Dendritic cell treated with granulocyte-macrophage colony-stimulating factor and Interleukin-4, amounts not matched to agents 40 ng/mL and 50 ng/mL, for 4 days (primary cell): ENCODE measurements at regions of chr21 and their contacts with region 1.

Region 1: DNA sequence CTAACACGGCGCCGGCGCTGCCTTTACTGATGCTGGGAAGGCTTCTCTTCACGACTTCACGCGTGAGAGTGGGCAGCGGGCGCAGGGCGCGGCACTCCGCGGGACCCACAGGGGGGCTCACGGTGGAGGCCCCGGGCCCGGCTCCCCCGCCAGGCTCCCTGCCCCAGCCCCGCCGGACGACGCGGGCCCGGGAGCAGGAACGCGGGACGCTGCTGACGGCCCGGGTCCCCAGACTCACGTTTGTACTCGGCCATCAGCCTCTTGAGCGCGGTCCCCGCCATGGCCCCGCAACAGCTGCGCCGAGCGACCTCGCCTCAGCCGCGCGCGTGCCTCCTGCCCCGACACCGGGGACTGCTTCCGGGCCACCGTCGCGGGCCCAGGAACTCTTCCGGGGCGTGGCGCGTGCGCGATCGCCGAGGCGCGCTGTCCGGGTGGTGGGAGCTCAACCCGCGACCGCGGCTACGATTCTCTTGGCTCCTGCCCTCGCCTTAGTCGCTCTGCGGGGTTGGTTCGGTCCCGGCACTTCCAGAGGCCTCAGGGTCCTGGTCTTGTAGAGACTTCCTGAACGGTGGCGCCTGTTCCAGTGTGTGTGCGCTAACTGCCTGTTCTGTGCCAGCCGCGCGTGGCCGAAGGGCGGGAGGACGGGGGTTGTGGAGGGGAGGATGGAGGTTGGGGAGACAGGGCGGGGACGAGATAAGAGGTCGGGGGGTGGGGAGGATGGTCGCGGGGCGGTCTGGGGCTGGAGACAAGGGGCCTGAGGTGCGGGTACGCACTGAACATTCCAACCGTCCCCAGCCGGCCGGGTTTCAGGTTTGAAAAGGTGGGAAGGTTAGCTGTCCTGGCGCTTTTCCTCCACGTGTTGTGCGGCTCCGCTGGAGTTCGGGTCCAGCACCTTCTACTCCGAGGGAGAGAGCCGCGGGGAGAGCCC is at the start of gene UBE2G2:
- H3K4me3 Mint-ChIP-seq: peak within 1 kb of the TSS; percentile 81
- H3K27ac Mint-ChIP-seq: peak within 1 kb of the TSS; percentile 80
- H3K4me1 Mint-ChIP-seq: peaks cover 38% of the 10 kb centered on the region
- H3K27me3 Mint-ChIP-seq: no peaks in the 10 kb centered on the region

Region 2: DNA sequence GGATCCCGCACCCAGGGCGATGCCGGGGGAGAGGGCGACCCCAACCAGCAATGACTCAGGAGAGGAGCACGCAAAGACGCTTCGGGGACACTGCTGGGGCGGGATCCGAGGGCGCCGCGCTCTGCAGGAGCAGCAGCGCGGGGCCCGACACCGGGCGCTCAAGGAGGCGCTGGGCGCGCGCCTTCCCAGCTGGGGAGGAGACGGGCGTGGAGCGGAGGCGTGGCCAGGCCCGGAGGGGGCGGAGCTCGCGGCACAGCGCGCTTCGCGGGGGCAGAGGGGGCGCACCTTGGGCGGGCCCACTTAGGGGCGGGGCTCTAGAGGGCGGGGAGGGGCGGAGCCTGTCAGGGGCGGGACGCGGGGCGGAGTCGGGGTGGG is 15.8 kb after region 1 on chr21:
- intact Hi-C with region 1: loop called (anchors 1 kb)
- H3K4me3 Mint-ChIP-seq: peak overlapping the region; percentile 77
- H3K27ac Mint-ChIP-seq: peak overlapping the region; percentile 77
- H3K4me1 Mint-ChIP-seq: peaks cover 39% of the 10 kb centered on the region
- H3K27me3 Mint-ChIP-seq: peaks cover 13% of the 10 kb centered on the region

Region 3: DNA sequence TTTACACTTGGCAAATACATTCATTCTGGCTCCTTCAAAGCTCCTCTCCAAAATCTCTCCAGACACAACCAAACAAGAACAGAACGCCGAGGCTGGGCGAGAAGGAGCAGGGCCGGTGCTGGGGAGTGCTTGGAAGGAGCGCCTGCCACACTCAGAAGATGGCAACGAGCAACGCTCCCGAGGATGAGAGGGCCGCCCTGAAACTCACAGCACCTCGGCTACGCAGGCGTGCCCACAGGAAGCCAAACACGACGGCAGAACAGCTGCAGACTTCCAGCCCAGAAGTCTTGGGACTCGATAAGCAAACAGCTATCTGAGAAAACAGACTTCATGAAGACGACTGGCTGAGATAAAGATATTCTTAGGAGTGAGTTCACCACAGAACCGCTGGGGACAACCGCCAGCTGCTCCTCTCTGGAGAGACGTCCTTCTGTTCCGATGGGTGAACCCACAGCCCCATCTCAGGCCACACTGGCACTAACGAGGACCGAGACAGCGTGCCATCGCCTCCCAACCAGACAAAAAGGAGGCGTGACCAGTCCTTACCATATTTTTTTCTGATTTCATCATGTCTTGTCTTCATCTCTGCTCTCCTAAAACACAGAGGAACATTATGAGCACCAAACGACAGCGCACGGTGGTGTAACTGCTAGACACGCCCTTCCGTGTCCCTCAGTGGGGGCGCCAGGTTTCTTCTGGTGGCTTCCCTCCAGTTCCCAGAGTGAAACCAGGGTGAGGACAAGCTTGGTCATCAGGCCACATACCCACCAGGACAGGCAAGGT is 53.1 kb after region 1 on chr21:
- intact Hi-C with region 1: no loop called
- H3K4me3 Mint-ChIP-seq: no peak overlapping the region
- H3K27ac Mint-ChIP-seq: no peak overlapping the region
- H3K4me1 Mint-ChIP-seq: peaks cover 62% of the 10 kb centered on the region
- H3K27me3 Mint-ChIP-seq: no peaks in the 10 kb centered on the region

Region 4: DNA sequence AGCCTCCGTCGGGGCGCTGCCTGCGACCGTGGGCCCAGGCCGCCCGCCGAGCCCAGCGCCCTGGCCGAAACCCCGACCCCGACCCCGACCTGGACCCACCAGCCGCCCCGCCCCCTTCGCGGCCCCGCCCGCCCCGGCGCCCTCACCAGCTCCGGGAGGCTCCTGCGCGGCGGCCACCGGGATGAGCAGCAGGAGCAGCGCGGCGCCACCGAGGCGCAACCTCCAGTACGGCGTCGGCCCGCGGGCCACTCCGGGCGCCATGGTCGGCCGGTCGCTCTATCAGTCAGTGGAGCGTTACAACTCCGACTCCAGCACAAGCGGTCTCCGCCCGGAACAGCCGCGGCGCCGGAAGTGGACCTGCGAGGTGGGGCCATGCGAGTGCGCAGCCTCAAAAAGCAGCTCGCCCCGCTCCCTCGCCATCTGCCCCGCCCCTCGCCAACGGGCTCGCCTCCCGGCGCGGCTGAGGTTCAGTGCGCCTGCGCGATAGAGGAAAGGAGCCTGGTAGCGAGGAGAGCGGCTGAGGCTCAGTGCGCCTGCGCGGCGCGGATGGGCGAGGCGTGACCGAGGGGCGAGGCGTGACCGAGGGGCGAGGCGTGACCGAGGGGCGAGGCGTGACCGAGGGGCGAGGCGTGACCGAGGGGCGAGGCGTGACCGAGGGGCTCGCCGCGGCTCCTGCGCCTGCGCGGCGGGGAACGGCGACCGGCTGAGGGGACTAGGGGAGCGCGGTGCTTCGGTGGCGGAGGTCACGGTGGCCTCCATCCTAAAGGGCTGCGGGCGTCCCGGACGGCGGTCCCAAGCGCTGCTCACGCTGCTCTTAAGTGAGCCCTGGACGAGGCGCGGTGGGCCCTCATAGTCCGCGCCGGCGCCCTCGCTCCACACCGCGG is 71.9 kb after region 1 on chr21 and contains the start of gene PTTG1IP:
- intact Hi-C with region 1: loop called (anchors 5 kb)
- H3K4me3 Mint-ChIP-seq: peak within 1 kb of the TSS; percentile 97
- H3K27ac Mint-ChIP-seq: peak within 1 kb of the TSS; percentile 100
- H3K4me1 Mint-ChIP-seq: peaks cover 69% of the 10 kb centered on the region
- H3K27me3 Mint-ChIP-seq: no peaks in the 10 kb centered on the region

Region 5: GRCh38 chr21:44911389-44912157 is 109.8 kb after region 1 on chr21:
- intact Hi-C with region 1: loop called (anchors 5 kb)
- H3K4me3 Mint-ChIP-seq: peak overlapping the region; percentile 65
- H3K27ac Mint-ChIP-seq: peak overlapping the region; percentile 79
- H3K4me1 Mint-ChIP-seq: peaks cover 95% of the 10 kb centered on the region
- H3K27me3 Mint-ChIP-seq: no peaks in the 10 kb centered on the region

Region 6: GRCh38 chr21:44927587-44928461 is 126.1 kb after region 1 on chr21:
- intact Hi-C with region 1: loop called (anchors 5 kb)
- H3K4me3 Mint-ChIP-seq: peak overlapping the region; percentile 80
- H3K27ac Mint-ChIP-seq: peak overlapping the region; percentile 86
- H3K4me1 Mint-ChIP-seq: peaks cover 83% of the 10 kb centered on the region
- H3K27me3 Mint-ChIP-seq: no peaks in the 10 kb centered on the region

Region 7: GRCh38 chr21:46122237-46122671 is 1320.5 kb after region 1 on chr21:
- intact Hi-C with region 1: no loop called
- H3K4me3 Mint-ChIP-seq: no peak overlapping the region
- H3K27ac Mint-ChIP-seq: no peak overlapping the region
- H3K4me1 Mint-ChIP-seq: no peaks in the 10 kb centered on the region
- H3K27me3 Mint-ChIP-seq: no peaks in the 10 kb centered on the region